ENCODE measurements at regions of chr11 and their contacts with region 1.

Region 1: GRCh38 chr11:42802201-42802899 is 509.4 kb upstream of the API5 start:
- DNase-seq: no peak
- H3K4me3 ChIP-seq: no peak overlapping the region
- CTCF ChIP-seq: no peak
- POLR2A ChIP-seq: no peak

Region 2: GRCh38 chr11:42315267-42315666 is 487.1 kb before region 1 on chr11:
- intact Hi-C with region 1: no loop called
- DNase-seq: no peak
- H3K4me3 ChIP-seq: no peak overlapping the region
- CTCF ChIP-seq: no peak
- POLR2A ChIP-seq: no peak

Region 3: DNA sequence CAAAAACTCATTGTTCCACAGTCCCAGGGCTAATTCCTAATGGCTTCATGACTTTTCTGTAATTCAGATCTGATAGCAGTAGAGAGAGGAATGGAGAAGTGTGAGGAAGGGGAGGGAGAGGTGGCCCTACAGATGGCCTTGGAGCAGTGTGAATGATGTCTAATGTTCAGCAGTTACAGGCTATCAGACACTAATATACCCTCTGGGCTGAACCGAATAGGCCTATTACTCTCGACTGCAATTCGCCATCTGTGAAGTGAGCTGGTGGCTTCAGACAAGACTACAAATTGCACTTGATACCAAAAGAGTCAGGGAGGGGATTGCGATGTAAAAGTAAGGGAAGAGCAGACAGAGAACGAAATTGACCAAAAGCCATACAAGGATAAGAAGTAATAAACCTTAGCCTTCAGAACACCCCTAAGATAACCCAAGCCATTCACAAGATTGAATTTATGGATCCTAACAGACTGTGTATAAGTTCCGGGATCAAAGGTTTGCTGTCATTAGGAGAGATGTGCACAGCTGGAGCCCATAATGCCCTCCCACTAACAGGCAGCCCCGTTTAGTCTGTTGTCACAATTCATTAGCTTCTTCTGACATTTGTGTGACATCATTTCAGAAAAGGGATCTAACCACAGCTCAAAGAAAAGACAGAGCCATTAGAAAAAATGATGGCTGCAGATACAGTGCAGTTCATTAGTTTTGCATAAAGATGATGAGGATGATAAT is 132.9 kb before region 1 on chr11:
- intact Hi-C with region 1: no loop called
- DNase-seq: no peak
- H3K4me3 ChIP-seq: no peak overlapping the region
- CTCF ChIP-seq: no peak
- POLR2A ChIP-seq: no peak

Region 4: DNA sequence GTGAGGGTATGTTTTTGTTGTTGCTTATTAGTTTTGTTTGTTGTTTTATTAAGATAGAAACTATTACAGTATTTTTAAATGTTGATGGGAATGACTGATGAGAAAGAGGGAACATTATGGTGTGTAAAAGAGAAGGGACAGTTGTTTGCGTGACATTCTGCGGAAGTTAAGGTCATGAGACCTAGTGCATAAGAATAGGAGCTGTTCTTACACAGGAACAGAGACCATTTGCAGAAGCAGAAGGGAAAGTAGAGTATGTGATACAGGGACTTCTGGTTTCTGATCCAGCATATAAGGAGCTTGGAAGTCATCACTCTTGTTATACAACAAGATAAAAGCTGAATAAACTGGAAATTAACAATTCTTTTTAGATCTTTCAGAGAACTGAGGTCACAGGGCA is 210.3 kb after region 1 on chr11:
- intact Hi-C with region 1: no loop called
- DNase-seq: no peak
- H3K4me3 ChIP-seq: no peak overlapping the region
- CTCF ChIP-seq: no peak
- POLR2A ChIP-seq: no peak

Region 5: GRCh38 chr11:43145653-43146052 is 343.3 kb after region 1 on chr11:
- intact Hi-C with region 1: no loop called
- DNase-seq: no peak
- H3K4me3 ChIP-seq: no peak overlapping the region
- CTCF ChIP-seq: no peak
- POLR2A ChIP-seq: no peak

Region 6: GRCh38 chr11:44519989-44520737 is 1717.8 kb after region 1 on chr11:
- intact Hi-C with region 1: loop called (anchors 10 kb)
- DNase-seq: no peak
- H3K4me3 ChIP-seq: no peak overlapping the region
- CTCF ChIP-seq: no peak
- POLR2A ChIP-seq: no peak